Heart left ventricle (tissue), 16 donors: ENCODE measurements at regions of chr9 and their contacts with region 1.

Region 1: DNA sequence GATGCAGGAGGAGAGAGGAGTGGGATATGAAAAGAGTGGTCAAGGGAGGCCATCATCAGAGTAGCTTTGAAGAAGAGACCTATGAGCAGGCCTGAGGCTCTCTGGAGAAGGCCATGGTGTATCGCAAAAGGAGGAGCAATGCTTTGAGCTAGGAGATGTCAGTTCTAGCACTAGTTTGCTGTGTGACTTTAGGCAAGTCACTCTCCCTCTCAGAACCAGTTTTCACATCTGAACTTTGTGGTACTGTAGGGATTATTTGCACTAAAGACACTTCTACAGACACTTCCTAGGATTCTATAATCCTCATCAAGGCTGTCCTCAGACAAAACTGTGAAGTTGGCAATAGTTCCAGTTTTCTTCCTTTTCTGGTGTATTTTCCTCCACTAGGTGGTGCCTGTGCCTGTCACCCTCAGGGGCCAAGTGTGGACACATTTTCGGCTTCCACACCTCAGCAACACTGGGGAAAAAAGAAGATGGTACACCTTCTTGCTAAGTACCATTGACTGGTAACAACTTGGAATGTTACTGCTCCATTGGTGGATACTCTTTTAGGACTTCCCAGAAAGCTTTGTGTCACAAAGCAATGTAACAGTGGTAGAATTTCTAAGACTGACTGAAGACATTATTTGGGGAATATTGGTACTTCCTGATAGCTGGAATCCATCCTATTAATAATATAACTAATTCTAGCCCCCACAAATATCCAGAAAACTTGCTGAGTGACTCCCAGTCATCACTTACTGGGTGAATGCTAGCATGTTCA is 9.9 kb downstream of the PAPPA start:
- DNase-seq: no peak
- ATAC-seq: peak in 1 of 4 donors; percentile 41
- H3K4me3 ChIP-seq: no peak overlapping the region
- H3K27ac ChIP-seq: no peak overlapping the region
- H3K4me1 ChIP-seq: peaks cover 0 to 15% (median 0%) of the 10 kb centered on the region in 12 donors
- H3K27me3 ChIP-seq: no peaks in the 10 kb centered on the region
- CTCF ChIP-seq: peak; percentile 17 to 56 (median 34)
- POLR2A ChIP-seq: no peak

Region 2: DNA sequence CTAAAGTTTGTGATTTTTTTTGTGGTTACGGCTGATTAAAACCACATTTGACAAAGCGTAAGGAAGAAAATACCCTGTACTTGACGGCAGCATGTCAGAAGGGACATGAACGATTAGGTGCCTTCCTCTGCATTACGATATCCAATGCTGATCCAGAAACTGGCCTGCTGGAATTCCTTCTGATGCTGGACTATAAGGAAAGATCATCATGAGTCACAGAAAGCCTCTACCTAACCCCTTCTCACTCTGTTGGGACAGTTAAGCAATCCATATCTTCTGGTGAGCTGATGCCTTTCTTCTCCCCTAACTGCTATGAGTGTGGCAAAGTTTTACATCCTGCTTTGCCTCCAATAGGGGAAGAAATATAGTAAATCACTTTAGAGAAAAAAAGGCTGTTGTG is 88.3 kb before region 1 on chr9:
- intact Hi-C with region 1: no loop called
- DNase-seq: no peak
- ATAC-seq: no peak
- H3K4me3 ChIP-seq: no peak overlapping the region
- H3K27ac ChIP-seq: no peak overlapping the region
- H3K4me1 ChIP-seq: no peaks in the 10 kb centered on the region
- H3K27me3 ChIP-seq: no peaks in the 10 kb centered on the region
- CTCF ChIP-seq: no peak
- POLR2A ChIP-seq: no peak

Region 3: GRCh38 chr9:116209406-116210116 is 46.1 kb after region 1 on chr9:
- intact Hi-C with region 1: no loop called
- DNase-seq: no peak
- ATAC-seq: peak in 1 of 4 donors; percentile 46
- H3K4me3 ChIP-seq: no peak overlapping the region
- H3K27ac ChIP-seq: no peak overlapping the region
- H3K4me1 ChIP-seq: no peaks in the 10 kb centered on the region
- H3K27me3 ChIP-seq: no peaks in the 10 kb centered on the region
- CTCF ChIP-seq: no peak
- POLR2A ChIP-seq: no peak

Region 4: GRCh38 chr9:116219686-116220085 is 56.2 kb after region 1 on chr9:
- intact Hi-C with region 1: no loop called
- DNase-seq: peak in 3 of 5 donors; percentile 27 to 50 (median 31)
- ATAC-seq: peak in 3 of 4 donors; percentile 47 to 87 (median 84)
- H3K4me3 ChIP-seq: no peak overlapping the region
- H3K27ac ChIP-seq: no peak overlapping the region
- H3K4me1 ChIP-seq: no peaks in the 10 kb centered on the region
- H3K27me3 ChIP-seq: no peaks in the 10 kb centered on the region
- CTCF ChIP-seq: peak in 2 of 12 donors; percentile 7 to 14
- POLR2A ChIP-seq: no peak

Region 5: GRCh38 chr9:116355153-116355921 is 191.9 kb after region 1 on chr9:
- intact Hi-C with region 1: loop called in 3 of 10 experiments (anchors 10 kb)
- DNase-seq: peak in 4 of 5 donors; percentile 33 to 57 (median 36)
- ATAC-seq: peak; percentile 83 to 90 (median 86)
- H3K4me3 ChIP-seq: no peak overlapping the region
- H3K27ac ChIP-seq: peak overlapping the region in 9 of 12 donors; percentile 33 to 75 (median 62)
- H3K4me1 ChIP-seq: peaks cover 0 to 25% (median 7%) of the 10 kb centered on the region in 12 donors
- H3K27me3 ChIP-seq: no peaks in the 10 kb centered on the region
- CTCF ChIP-seq: no peak
- POLR2A ChIP-seq: no peak

Region 6: GRCh38 chr9:116365056-116365471 is 201.6 kb after region 1 on chr9:
- intact Hi-C with region 1: loop called in 2 of 10 experiments (anchors 10 kb)
- DNase-seq: peak; percentile 65 to 74 (median 68)
- ATAC-seq: peak; percentile 87 to 97 (median 96)
- H3K4me3 ChIP-seq: peak overlapping the region in 5 of 12 donors; percentile 18 to 34 (median 25)
- H3K27ac ChIP-seq: peak overlapping the region in 8 of 12 donors; percentile 39 to 76 (median 61)
- H3K4me1 ChIP-seq: peaks cover 0 to 25% (median 7%) of the 10 kb centered on the region in 12 donors
- H3K27me3 ChIP-seq: no peaks in the 10 kb centered on the region
- CTCF ChIP-seq: peak in 1 of 12 donors; percentile 30
- POLR2A ChIP-seq: no peak

Region 7: DNA sequence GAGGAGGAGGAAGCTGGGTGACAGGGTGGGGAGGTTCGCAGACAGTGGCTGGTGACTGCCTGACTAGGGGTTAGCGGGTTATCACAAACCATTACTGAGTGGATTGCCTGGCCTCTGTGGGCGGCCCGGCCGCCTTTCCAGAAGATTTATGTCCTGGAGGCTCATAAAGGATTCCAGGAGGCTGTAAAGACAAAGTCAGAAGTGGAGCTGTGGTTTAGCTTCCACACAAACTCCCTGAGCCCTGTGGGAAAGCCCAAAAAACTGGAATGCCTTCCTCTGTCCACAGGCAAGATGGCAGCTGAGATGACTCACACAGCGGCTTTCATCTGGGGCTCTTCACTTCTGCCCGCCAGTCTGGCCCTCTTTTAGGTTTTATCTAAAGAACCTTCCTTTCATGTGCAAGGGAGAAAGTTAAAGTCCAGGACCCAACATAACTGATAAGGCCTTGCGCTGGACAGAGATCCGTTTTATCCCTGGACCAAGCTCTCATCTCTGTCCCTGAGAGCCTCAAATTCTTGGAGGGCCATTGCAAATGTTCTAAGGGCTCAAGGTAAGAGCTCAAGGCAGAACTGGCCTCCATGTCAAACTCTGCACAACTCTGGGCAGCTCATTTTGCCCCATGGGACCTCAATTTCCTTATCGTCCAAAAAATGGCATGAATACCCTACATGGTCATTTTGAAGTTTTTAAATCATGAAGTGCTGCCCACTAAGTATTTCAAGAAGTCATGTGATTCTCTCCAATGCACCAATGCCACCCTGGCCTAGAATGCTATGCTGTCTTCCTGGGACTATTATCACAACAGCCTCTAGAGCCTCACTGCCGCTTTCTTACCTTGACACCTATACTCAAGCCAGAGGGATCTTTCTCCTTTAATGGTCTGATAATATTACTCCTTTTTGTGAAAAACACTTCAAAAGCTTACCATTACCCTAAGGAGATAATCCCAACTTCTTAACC is 274.2 kb after region 1 on chr9:
- intact Hi-C with region 1: no loop called
- DNase-seq: no peak
- ATAC-seq: no peak
- H3K4me3 ChIP-seq: no peak overlapping the region
- H3K27ac ChIP-seq: no peak overlapping the region
- H3K4me1 ChIP-seq: no peaks in the 10 kb centered on the region
- H3K27me3 ChIP-seq: no peaks in the 10 kb centered on the region
- CTCF ChIP-seq: no peak
- POLR2A ChIP-seq: no peak